ENCODE measurements at regions of chr9 and their contacts with region 1.

Region 1: DNA sequence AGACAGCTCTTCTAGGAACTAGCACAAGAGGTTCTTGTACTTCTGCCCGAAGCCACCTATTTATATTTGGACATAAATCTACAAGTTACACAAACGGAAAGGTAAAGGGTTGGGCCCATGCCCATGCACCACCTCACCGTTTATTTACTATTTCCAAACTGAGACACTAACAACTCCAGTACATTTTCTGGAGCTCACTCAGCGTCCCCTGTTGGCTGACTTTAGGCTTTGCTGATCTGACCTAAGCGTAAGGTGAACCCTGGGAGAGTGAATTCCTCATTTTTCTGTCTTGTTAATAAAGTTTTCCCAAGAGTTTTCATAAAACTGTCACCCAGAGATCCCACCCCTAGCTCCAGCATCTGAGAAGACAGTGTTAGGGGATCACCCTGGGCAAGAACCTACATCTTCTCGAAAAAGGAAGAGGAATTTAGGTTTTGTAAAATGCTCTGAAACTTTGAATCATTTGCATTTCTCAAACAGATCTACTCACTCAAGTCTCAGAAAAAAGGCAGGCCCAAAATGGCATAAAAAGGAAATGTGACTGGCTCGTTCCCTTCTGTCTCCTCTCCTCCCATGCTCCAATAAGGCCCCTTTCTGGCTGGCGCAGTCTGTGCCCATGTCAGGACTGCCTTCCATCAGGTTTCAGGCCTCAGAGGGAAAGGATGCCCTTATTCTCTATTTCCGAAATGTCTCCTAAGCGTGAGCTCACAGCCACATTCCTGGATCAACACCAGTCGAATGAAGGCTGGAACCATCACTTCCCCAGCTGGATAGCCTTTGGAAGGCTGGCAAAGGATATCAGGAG is 201.3 kb downstream of the FANCC start:
- DNase-seq: no peak
- CTCF ChIP-seq: no peak

Region 2: DNA sequence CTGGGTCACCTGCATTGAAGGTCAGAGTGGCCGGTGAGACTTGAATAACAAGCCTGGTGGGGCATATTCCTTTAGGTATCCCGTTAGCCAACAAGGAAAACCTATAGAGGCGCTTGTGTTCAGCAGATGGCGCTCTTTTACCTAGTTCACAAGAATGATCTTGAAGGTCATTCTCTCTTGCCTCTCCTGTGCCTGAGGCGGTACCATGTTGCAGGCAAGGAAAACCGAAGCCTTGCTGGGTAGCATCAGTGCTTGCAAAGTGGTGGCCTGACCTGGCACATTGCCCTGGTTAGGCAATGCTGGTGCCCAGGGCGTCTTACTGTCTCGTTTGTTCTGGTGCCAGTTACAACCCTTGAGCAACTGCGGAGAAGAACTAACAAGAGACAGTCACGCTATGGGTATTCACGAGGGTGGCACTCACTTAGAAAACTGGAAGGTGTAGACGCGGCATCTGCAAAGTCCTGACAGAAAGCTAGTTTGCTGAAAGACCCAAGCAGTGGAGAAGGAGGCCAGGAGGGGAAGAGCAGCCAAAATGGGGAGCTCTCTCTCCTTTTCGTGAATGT is 333.0 kb before region 1 on chr9:
- in situ Hi-C with region 1: loop called (anchors 10 kb)
- DNase-seq: peak; percentile 45
- CTCF ChIP-seq: peak; percentile 63